ENCODE measurements at regions of chr7 and their contacts with region 1.

Region 1: DNA sequence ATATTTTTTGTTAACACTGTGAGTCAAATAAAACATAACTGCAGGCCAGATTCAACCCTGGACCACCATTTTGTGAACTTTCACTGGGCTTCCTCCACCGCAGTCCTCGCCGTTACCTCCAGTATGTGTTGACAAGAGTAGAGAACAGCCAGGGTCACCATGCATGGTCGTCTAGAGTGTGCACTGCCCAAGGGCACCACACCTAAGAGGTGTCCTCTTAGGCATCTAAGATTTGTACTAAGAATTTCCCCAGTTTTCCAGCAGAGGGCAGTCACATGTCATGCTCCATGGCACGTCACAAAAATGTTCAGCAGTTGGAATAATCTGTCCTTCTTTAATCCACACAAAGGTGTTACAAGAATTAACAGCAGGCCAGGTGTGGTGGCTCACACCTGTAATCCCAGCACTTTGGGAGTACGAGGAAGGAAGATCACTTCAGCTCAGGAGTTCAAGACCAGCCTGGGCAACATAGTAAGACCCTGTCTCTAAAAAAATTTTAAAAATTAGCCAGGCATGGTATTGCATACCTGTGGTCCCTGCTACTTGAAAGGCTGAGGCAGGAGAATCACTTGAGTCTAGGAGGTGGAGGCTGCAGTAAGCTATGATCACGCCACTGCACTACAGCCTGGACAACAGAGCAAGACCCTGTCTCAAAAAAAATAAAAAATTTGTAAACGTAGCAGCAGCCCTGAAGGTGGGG is 71.2 kb upstream of the FOXK1 start:
- DNase-seq: peak; percentile 71
- H3K4me3 ChIP-seq: no peak overlapping the region
- H3K27ac ChIP-seq: no peak overlapping the region
- H3K4me1 ChIP-seq: no peaks in the 10 kb centered on the region
- H3K27me3 ChIP-seq: no peaks in the 10 kb centered on the region
- CTCF ChIP-seq: peak; percentile 70 to 88 (median 80)
- POLR2A ChIP-seq: no peak

Region 2: DNA sequence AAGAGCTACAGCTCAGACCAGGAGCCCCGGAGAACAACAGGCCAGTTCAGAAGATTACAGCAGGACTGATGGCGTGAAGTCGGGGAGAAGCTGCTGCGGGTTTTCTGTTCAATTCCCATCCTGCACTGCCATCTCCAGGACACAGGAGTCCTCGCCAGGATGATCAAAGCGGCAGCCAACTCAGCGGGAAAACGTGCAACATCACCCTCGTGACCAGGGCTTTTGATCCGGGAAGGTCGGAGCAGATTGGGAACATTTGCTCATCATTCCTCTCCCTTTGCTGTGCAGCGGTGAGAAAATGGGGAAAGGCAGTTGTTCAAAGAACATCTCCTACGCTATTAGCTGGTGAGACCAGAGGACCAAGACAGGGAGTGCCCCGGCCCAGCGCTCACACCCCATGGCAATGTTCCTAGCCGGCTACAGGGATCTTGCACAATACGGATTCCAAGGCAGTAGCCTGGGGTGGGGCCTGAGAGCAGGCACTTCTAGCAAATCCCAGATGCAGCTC is 20.8 kb after region 1 on chr7:
- intact Hi-C with region 1: loop called (anchors 1 kb)
- DNase-seq: peak; percentile 84
- H3K4me3 ChIP-seq: peak overlapping the region in 1 of 2 donors; percentile 2
- H3K27ac ChIP-seq: no peak overlapping the region
- H3K4me1 ChIP-seq: no peaks in the 10 kb centered on the region
- H3K27me3 ChIP-seq: no peaks in the 10 kb centered on the region
- CTCF ChIP-seq: peak in 3 of 4 experiments; percentile 46 to 85 (median 77)
- POLR2A ChIP-seq: no peak

Measured in prostate gland (tissue), 2 donors.